CD14-positive monocyte (primary cell): ENCODE measurements at regions of chr2 and their contacts with region 1.

Region 1: DNA sequence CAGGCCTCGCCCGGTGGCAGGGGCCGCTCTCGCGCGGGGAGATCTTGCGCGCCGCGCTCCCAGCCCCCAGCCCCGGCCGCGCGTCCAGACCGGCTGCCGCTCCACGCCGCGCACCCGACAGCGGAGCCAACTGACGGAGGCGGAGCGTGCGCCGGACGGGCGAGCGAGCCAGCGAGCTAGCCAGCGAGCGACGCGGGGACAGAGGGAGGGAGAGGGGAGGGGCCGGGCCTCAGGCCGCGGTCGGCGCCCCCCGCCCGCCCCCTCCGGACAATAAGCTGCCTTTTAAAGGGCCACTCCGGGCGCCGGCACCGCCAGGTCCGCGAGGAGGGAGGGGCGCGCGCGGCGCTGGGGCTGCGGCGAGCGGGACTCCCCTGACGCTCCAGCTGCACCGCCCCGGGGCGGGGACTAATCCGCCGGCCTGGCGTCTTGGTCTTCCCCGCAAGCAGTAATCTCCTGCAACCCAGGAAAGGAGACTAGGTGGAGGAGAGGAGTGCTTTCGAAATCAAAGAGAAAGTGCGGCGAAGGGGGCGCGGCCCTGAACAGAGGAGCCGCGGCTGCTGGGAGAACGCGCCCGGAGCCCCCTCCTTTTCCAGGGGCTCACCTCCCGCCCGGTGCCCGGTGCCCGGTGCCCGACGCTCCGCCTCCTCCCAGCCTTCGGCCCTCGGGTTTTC is at the start of gene BIN1:
- DNase-seq: peak; percentile 65 to 76 (median 71)
- H3K4me3 ChIP-seq: peak within 1 kb of the TSS; percentile 52 to 81 (median 54)
- H3K4me3 Mint-ChIP-seq: peak within 1 kb of the TSS; percentile 83 to 90
- H3K27ac ChIP-seq: no peak within 1 kb of the TSS
- H3K27ac Mint-ChIP-seq: peak within 1 kb of the TSS in 4 of 7 donors; percentile 35 to 80 (median 58)
- H3K4me1 ChIP-seq: peaks cover 20 to 23% of the 10 kb centered on the region in 2 donors
- H3K4me1 Mint-ChIP-seq: peaks cover 10% of the 10 kb centered on the region
- H3K27me3 ChIP-seq: peaks cover 4 to 30% of the 10 kb centered on the region in 2 donors
- H3K27me3 Mint-ChIP-seq: peaks cover 18 to 45% (median 28%) of the 10 kb centered on the region in 3 donors
- CTCF ChIP-seq: no peak
- polyA plus RNA-seq, gene BIN1: 3.4 to 7.5 (median 4.1) TPM

Region 2: DNA sequence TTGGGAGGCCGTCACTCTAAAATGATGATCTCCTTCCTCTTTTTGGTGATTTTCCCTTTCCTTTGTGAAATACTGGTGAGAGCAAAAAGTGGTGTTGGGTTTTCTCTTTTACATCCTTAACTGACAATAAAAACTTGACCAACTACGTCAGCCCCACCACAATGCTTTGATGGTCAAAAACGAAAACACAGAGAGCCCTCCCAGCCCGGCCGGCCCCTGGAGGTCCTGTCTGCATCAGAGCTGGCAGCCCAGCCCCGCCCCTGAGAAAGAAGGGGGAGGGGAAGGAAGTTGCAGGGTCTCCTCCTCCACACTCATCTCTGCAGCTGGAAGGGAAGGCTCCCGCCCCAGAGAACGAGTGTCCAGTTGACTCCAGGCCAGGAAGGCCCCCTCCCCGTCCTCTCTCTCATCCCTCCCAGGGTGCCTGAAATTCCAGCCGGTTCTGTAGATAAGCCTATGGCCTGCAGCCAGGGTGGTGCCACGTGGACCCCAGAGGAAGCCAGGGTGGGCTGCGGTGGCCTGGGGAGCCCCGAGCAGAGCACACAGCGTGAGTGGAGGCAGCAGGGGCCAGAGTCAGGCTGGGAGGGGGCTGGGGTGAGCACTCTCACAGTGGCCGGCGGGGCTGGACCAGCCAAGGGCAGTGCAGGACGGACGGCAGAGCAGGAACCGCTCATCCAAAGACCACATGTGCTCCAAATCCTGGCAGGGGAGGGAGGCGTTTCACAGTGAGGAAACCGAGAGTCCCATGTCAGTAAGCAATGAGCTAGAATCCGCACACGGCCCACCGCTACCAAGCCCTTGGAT is 19.9 kb before region 1 on chr2:
- intact Hi-C with region 1: loop called in 1 of 2 experiments (anchors 2 kb)
- DNase-seq: peak; percentile 77 to 82 (median 79)
- H3K4me3 ChIP-seq: peak overlapping the region in 2 of 3 experiments; percentile 3 to 64
- H3K4me3 Mint-ChIP-seq: peak overlapping the region; percentile 68 to 74
- H3K27ac ChIP-seq: peak overlapping the region; percentile 66 to 72
- H3K27ac Mint-ChIP-seq: peak overlapping the region; percentile 82 to 91 (median 86)
- H3K4me1 ChIP-seq: peaks cover 56 to 61% of the 10 kb centered on the region in 2 donors
- H3K4me1 Mint-ChIP-seq: peaks cover 60% of the 10 kb centered on the region
- H3K27me3 ChIP-seq: no peaks in the 10 kb centered on the region
- H3K27me3 Mint-ChIP-seq: peaks cover 6 to 18% (median 9%) of the 10 kb centered on the region in 3 donors
- CTCF ChIP-seq: no peak